Endothelial cell of umbilical vein (primary cell): ENCODE measurements at regions of chr3 and their contacts with region 1.

Region 1: GRCh38 chr3:88180398-88180999 is 30.7 kb downstream of the C3orf38 start:
- DNase-seq: peak; percentile 48
- H3K4me3 ChIP-seq: no peak overlapping the region
- H3K27ac ChIP-seq: no peak overlapping the region
- H3K4me1 ChIP-seq: no peaks in the 10 kb centered on the region
- H3K27me3 ChIP-seq: no peaks in the 10 kb centered on the region
- CTCF ChIP-seq: peak; percentile 8 to 17
- POLR2A ChIP-seq: no peak

Region 2: DNA sequence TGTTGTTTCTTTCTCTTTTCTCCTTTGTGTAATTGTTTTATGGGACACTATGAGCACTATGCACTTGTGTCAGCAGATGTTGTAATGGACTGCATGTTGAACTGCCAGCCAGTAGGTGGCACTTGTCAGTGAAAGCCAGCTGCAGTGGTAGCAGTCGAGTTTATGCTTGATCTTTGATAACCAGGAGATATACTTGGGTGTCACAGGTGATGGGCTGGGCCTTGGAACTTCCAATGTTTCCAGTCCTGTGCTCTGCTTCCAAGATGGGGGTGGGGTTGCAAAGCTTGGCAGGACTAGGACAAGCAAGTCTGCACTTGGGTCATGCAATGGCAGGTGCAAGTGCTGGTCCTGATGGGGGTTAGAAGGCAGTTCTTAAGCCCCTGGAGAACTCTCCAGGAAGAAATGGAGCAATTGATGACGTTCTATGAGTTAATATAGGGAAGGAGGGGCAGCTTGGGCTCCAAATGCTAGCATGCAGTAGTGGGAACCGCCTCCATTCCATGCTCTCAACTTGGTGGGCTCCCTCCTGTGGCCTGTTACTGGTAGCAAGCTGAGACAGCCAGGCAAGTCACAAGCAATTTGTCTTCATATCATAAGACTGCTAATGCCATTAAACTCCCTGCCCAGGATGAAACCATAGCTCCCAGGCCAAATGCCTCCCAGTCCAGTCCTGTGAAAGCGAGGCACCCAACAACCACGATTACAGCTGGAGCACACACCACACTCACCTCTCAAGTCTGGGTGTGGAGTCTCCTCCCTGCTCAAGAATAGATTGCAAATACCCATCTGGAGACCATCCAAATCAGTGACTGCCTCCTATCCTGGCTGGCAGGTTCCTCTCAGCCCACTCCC is 408.9 kb before region 1 on chr3:
- CTCF ChIA-PET with region 1: interaction called, 14 read pairs
- POLR2A ChIA-PET with region 1: no interaction called
- dilution Hi-C with region 1: no loop called
- intact Hi-C with region 1: loop called (anchors 1 kb)
- DNase-seq: peak; percentile 52
- H3K4me3 ChIP-seq: no peak overlapping the region
- H3K27ac ChIP-seq: no peak overlapping the region
- H3K4me1 ChIP-seq: no peaks in the 10 kb centered on the region
- H3K27me3 ChIP-seq: peaks cover 0 to 3% of the 10 kb centered on the region in 2 experiments
- CTCF ChIP-seq: peak; percentile 76 to 79
- POLR2A ChIP-seq: no peak

Region 3: GRCh38 chr3:88259045-88259444 is 78.5 kb after region 1 on chr3:
- CTCF ChIA-PET with region 1: no interaction called
- POLR2A ChIA-PET with region 1: no interaction called
- dilution Hi-C with region 1: no loop called
- intact Hi-C with region 1: no loop called
- DNase-seq: no peak
- H3K4me3 ChIP-seq: no peak overlapping the region
- H3K27ac ChIP-seq: no peak overlapping the region
- H3K4me1 ChIP-seq: no peaks in the 10 kb centered on the region
- H3K27me3 ChIP-seq: no peaks in the 10 kb centered on the region
- CTCF ChIP-seq: no peak
- POLR2A ChIP-seq: no peak